ENCODE measurements at regions of chr19 and their contacts with region 1.

Region 1: DNA sequence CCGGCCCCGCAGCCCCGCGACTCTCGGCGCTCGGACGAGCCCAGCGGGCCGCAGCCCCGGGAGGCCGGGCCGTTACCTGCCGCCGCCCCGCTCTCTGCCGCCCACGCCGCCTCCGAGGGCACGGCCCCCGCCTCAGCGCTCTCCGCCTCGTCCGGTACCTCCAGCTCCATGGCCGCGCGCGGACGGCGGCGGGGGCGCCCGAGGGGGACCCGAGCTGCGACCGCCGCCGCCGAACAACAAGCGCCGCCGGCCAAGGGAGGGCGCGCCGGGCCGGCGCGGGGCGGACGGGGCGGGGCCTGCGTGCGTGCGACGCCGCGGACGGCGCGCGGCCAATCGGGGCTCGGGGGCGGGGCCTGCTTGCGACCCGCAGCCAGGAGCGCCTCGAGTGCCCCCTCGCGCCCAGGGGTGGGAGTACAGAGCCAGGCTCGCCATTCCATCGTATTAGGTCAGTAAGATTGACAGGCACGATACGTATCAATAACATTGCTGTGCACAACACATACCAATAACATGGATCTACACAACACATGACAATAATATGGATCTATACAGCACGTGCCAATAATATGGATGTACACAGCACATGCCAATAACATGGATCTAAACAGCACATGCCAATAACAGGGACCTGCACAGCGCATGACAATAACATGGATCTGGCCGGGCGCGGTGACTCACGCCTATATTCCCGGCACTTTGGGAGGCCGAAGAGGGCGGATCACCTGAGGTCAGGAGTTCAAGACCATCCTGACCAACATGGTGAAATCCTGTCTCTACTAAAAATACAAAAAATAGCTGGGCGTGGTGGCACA is at the start of gene PIP5K1C:
- DNase-seq: peak; percentile 90
- H3K4me3 Mint-ChIP-seq: peak within 1 kb of the TSS; percentile 91
- H3K27ac Mint-ChIP-seq: peak within 1 kb of the TSS; percentile 70
- H3K4me1 Mint-ChIP-seq: peaks cover 5% of the 10 kb centered on the region
- H3K27me3 Mint-ChIP-seq: no peaks in the 10 kb centered on the region
- total RNA-seq, gene PIP5K1C: 24.5 and 28.0 TPM in 2 replicates

Region 2: DNA sequence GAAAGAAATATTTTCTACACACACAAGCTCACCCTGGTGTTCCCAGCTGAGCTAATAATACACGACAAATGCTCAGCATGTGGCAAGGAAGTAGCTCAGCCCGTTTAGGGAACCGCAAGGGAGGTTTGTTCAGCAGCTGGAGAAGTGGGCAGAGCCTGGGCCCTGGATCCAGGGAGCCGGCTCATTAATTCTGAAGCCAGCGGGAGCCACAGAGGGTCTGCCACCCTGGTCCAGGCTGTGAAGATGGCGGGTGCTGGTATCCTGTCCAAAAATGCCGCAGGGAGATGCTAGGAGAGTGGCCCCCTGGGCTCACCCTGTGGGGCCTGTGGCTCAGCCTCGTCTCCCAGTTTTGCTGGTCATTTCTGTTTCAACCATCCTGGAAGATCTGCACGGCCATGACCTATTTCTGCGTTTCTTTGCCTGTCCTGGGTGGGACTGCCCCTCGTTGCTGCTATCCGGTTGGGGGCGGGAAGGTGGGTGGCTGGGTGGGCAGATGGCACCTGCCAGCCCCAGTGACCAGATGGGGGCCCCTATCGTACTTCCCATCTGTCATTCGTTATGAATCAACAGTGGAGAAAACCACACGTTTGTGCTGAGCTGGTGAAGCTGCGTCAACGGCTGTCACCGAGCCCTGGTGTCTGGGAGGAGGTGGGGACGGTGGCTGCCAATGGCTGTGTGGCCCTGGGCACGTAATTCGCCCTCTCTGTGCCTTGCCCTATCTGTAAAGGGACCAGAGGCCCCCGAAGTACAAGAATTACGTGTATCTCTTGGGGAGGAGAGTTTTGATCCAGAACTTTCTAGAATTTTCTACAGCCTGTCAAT is 567.2 kb before region 1 on chr19:
- intact Hi-C with region 1: no loop called
- DNase-seq: peak; percentile 81
- H3K4me3 Mint-ChIP-seq: peak overlapping the region; percentile 70
- H3K27ac Mint-ChIP-seq: peak overlapping the region; percentile 96
- H3K4me1 Mint-ChIP-seq: peaks cover 30% of the 10 kb centered on the region
- H3K27me3 Mint-ChIP-seq: peaks cover 2% of the 10 kb centered on the region

Region 3: GRCh38 chr19:3665681-3666544 is 34.5 kb before region 1 on chr19:
- intact Hi-C with region 1: loop called (anchors 1 kb)
- DNase-seq: peak; percentile 66
- H3K4me3 Mint-ChIP-seq: no peak overlapping the region
- H3K27ac Mint-ChIP-seq: no peak overlapping the region
- H3K4me1 Mint-ChIP-seq: no peaks in the 10 kb centered on the region
- H3K27me3 Mint-ChIP-seq: no peaks in the 10 kb centered on the region

Region 4: GRCh38 chr19:3687774-3688706 is 12.4 kb before region 1 on chr19:
- intact Hi-C with region 1: loop called (anchors 1 kb)
- DNase-seq: no peak
- H3K4me3 Mint-ChIP-seq: peak overlapping the region; percentile 58
- H3K27ac Mint-ChIP-seq: no peak overlapping the region
- H3K4me1 Mint-ChIP-seq: peaks cover 31% of the 10 kb centered on the region
- H3K27me3 Mint-ChIP-seq: no peaks in the 10 kb centered on the region

Region 5: DNA sequence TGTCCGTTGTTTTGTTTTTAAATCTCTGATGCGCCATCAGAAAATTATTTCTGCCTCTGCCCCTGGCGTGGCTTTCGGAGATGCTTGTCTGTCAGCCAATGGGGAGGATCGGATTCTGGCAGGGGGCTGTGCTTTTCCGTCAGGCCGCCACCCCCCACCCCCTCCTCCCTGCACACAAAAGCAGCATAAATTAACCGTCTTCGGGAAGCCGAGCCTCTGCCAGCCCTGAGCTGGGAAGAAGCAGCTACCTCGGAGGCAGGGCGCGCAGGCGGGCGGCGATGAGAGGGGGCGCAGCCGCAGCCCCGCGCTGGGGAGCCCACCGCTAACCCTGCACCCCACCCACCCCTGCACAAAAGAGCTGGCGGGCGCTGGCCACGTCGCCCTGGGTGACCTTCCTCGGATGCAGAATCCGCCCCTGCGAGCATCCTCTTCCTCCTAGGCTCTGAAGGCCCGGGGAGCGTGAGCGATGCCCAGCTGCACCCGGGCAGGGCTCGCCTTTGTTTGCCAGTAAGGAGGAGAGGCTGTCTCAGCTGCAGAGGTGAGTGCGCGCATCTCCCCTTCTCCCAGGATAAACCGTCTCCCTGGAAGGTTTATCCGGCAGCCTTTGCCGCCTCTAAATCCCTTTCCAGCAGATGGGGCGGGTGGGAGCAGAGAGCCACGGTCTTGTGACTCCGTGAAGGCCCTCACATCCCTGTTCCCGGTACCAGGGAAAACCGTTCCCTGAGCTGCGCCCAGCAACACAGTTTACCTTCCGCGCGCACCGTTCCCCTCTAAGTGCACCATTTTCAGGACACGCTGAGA is 180.2 kb after region 1 on chr19 and contains the start of gene ATCAY:
- intact Hi-C with region 1: no loop called
- DNase-seq: no peak
- H3K4me3 Mint-ChIP-seq: no peak within 1 kb of the TSS
- H3K27ac Mint-ChIP-seq: no peak within 1 kb of the TSS
- H3K4me1 Mint-ChIP-seq: no peaks in the 10 kb centered on the region
- H3K27me3 Mint-ChIP-seq: peaks cover 22% of the 10 kb centered on the region
- total RNA-seq, gene ATCAY: not detected in 2 replicates

Measured in activated T-helper 1 cell treated with anti-CD3 and anti-CD28 coated beads, Interleukin-12 subunit alpha, Interleukin-12 subunit beta, Interleukin-2, Interleukin-4 antibody, amounts not matched to agents 30 ng/mL and 10 ng/mL and 1 ng/mL, durations not matched to agents 14 hours and 24 hours and 36 hours (primary cell).